Right ventricle myocardium superior (tissue), 1 donor: ENCODE measurements at regions of chr2 and their contacts with region 1.

Region 1: DNA sequence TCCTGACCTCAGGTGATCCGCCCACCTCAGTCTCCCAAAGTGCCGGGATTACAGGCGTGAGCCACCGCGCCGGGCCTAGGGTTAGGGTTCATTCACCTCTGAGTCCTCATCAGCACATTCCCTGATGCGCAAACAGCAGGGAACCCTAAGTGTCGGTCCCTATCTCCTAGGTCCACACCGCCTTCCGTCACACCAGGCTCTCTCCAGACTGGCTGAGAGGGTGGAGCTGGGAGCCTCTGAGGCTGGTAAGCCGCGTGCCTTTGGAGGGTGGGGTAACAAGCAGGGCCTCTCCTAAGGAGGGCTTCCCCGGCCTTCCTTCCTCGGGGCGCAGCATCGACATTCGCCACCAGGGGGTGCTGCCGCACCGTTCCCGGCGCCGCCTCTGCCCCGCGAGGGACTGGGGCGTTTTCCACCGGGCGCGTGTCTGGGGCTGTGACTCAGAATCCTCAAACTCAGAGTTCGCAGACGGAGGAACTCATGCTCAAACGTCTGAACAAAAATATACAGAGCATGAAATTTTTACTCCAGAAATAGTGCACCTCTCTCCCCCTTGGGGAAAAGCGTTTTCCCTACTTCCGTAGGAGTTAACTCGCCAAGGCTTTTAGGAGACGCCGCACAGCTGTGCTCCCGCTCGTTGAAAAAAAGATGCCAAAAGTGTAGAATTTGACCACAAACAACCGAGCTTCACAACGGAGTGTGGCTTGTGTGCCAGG is 63.9 kb upstream of the ASAP2 start:
- DNase-seq: peak; percentile 90
- ATAC-seq: peak; percentile 93

Region 2: GRCh38 chr2:8477552-8478470 is 664.9 kb before region 1 on chr2:
- intact Hi-C with region 1: no loop called
- DNase-seq: no peak
- ATAC-seq: no peak

Region 3: DNA sequence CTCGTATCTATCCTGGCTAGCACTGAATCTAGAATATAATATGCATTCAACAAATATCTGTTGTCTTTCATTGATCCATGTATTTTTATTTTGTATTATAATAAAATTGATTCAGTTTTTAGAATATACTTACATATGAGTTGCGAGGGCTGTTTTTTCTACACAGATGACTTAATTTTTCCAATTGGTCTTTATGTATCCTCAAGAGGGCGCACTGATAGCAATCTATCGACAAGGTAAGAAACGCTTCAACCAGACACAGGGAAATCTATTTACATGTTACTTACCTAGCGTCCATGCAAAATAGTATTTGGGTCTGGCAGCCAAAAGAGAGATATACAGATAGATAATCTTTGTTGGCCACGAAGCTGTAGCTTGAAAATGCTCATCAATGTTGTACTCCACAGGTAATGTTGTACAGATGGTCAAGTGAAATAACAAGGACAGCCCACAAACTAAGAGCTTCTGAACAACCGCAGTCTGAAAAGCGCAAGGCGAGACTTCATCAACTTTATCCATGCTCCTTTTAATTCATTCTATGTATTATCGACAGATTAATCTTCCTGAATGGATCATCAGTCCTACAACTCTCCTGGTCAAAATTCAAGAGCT is 269.8 kb before region 1 on chr2:
- intact Hi-C with region 1: loop called (anchors 5 kb)
- DNase-seq: no peak
- ATAC-seq: no peak

Region 4: DNA sequence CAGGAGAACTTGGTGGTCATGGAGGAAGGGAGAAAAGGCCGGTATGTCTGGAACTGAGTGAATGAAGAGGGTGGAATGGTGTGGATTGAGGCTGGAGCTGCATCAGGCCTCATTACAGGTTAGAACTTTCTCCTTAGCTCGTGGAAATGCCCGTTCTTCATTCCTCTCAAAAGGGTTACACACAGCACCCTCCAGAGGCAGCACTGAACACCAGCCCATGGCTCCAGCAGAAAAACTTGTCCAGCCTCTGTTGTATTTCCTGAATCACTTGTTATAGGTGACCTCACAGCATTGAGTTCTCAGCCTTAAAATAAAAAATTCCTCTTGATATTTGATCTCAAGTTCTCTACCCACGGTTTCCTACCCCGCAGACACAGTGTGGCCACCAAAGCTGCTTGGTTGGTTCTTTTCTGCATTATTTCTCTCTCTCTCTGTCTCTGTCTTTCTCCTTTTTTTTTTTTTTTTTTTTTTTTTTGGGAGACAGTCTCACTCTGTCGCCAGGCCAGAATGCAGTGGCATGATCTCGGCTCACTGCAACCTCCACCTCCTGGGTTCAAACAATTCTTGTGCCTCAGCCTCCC is 191.0 kb after region 1 on chr2:
- intact Hi-C with region 1: loop called (anchors 2 kb)
- DNase-seq: no peak
- ATAC-seq: peak; percentile 76

Region 5: DNA sequence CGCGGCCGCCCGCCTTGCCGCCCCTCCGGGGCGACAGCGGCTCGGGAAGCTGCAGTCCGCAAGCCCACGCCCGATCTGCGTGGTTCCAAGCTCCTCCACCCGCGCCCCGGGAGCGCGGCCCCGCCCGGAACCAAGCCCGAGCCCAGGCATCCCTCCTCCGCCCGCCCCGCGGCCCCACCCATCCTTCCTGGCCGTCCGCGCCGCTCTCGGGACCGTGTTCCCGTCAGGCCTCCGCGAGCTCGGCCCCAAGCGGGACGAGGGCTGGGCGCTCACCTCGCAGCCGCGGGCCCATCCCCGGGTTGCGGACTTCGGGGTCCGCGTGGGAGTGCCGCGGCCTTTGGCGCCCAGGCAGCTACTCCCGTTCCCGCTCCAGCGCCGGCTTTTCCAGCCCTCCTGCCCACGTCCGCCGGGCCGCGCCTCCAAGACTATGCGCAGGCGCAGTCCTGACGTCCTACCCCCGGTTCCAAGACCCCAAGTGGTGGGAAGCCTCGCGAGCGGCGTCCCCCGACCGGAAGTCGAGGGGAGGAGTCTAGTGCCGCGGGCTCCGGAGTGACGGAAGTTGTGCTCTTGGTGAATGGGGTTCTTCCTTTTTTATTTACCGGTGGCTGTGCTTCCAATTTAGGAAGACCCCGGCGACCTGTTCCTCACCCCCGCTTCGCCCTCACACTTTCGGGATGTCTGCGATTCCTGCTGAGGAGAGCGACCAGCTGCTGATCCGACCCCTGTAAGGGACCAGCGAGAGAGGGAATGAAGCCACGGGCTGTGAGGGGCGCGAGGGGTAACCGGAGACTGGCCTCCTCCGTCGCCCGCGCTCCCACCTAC is 280.6 kb after region 1 on chr2 and contains the starts of genes CPSF3 and ITGB1BP1:
- intact Hi-C with region 1: loop called (anchors 5 kb)
- DNase-seq: peak; percentile 98
- ATAC-seq: peak; percentile 98
- total RNA-seq, gene CPSF3: 14.0 TPM
- total RNA-seq, gene ITGB1BP1: 97.0 TPM